Activated T-helper 1 cell treated with anti-CD3 and anti-CD28 coated beads, Interleukin-12 subunit alpha, Interleukin-12 subunit beta, Interleukin-2, Interleukin-4 antibody, amounts not matched to agents 30 ng/mL and 10 ng/mL and 1 ng/mL, durations not matched to agents 14 hours and 24 hours and 36 hours (primary cell): ENCODE measurements at regions of chr9 and their contacts with region 1.

Region 1: DNA sequence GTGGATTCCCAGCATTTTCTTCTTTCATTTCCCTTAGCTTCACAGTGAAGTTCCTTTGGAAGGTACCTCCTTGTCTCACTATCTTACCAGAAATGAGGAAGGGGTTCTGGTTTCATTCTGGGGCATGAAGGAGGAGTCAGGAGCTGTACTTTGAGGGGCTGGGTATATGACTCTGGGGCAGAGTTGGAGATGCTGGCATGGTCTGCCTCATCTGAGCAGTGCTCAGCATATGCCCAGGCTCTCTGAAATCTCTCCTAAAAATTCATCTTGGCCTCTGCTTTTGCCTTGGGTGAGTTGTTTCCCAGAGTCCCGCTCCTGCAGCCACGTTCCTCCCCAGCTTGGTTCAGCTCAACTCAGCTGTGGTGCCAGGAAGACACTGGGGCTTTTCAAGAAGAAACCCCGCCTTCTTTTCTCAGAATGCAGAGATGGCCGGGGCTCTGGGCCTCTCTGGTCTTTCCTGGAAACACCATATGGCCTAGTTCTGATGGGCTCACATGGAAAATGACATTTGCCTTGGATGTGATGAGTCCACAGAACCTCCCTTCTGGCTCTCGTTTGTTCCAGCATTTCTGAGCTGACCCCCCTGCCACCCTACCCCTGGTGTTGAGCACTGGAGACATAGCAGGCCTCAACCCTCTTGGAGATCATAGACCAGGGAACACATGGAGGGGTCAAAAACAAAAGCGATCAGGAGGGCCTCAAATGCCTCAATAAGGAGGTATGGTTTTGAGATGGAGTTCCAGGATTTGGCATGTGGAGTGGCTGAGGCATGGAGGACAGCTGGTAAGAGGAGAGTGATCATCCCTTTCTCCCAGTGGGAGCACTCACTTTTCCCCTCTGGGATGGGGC is 12.0 kb upstream of the TGFBR1 start:
- DNase-seq: peak; percentile 57
- H3K4me3 Mint-ChIP-seq: peak overlapping the region; percentile 60
- H3K27ac Mint-ChIP-seq: peak overlapping the region; percentile 98
- H3K4me1 Mint-ChIP-seq: peaks cover 65% of the 10 kb centered on the region
- H3K27me3 Mint-ChIP-seq: no peaks in the 10 kb centered on the region

Region 2: DNA sequence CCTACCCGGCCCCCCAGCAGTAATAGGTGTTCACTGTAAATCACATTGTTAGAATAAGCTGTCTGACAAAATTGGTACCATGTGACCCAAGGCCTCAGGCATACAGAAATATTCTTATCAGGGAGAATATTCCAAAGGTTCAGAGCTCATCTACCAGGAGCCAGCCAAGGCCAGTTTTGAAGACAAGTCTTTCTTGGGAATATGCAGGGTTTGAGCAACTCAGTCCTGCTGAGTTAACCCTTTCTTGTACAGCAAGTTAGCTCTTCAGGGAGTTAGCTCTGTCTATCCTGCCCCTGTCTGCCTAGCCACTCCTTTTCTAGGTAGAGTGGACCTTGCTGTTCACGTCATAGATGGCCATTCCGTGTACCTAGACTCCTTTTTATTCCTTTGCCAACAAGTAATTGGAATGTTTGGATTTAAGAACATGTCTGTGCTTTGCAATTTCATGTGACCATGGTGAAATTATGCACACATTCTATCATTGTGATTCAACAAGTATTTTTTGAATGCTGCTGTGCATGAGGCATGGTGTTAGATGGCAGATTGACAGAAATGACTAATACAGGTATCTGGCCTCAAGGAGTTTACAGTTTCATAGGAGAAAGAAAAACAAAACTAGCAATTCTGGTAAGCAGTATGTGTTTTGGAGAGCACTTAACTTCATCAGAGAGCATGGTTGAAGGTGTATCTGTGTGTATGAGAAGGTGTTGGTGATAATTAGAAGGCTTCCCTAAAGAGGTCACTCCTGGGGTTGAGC is 34.7 kb after region 1 on chr9:
- intact Hi-C with region 1: loop called (anchors 5 kb)
- DNase-seq: no peak
- H3K4me3 Mint-ChIP-seq: peak overlapping the region; percentile 37
- H3K27ac Mint-ChIP-seq: peak overlapping the region; percentile 72
- H3K4me1 Mint-ChIP-seq: peaks cover 82% of the 10 kb centered on the region
- H3K27me3 Mint-ChIP-seq: no peaks in the 10 kb centered on the region